MCF 10A (cell line): ENCODE measurements at regions of chr4 and their contacts with region 1.

Region 1: DNA sequence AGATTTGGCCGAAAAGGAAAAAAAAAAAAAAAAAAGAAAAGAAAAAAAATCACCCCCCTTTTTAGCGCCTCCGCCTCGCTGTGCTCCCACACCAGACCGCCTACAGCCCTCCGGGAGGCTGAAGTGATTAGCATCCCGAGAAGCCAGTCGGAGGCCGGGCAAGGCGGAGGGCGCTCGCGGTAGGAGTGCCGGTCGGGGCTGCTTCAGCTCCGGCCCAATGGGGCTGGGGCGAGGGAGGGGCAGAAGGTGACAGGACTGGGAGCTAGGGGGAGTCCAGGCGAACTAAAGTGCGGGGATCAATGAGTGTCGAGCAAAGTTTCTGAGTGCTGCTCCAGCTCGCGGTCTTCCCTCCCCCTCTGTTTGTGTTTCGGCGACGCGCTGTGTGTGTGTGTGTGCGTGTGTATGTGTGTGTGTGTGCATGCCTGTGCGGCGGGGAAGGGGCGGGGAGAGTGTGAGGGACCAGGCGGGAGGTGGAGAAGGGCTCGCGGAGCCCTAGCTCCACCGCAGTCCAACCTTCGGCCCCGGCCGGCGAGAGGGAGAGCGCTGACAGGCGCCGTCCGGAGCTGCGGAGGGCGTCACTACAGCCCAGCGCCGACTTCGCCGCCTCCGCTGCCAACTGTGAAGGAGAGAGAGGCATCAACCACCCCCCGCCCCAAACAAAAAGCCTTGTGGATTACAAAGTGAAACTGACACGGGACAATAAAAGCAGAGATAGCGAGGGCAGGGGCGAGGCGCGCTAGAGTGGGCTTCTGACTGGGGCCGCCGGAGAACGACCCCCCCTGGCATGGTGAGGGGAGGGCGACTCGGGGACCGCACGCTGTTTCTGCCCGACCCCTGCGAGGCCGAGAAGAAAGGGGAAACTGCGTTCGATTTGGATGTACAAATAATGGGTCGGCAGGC is at the start of gene FAT4:
- DNase-seq: peak; percentile 95
- H3K4me3 Mint-ChIP-seq: peak within 1 kb of the TSS; percentile 99
- H3K27ac Mint-ChIP-seq: peak within 1 kb of the TSS; percentile 63
- H3K4me1 Mint-ChIP-seq: peaks cover 18% of the 10 kb centered on the region
- H3K27me3 Mint-ChIP-seq: no peaks in the 10 kb centered on the region
- CTCF ChIP-seq: no peak
- total RNA-seq, gene FAT4: 6.4 and 6.6 TPM in 2 replicates

Region 2: GRCh38 chr4:125303058-125303457 is 11.9 kb before region 1 on chr4:
- CTCF ChIA-PET with region 1: interaction called, 10 read pairs
- POLR2A ChIA-PET with region 1: no interaction called
- intact Hi-C with region 1: no loop called
- DNase-seq: no peak
- H3K4me3 Mint-ChIP-seq: no peak overlapping the region
- H3K27ac Mint-ChIP-seq: no peak overlapping the region
- H3K4me1 Mint-ChIP-seq: no peaks in the 10 kb centered on the region
- H3K27me3 Mint-ChIP-seq: no peaks in the 10 kb centered on the region
- CTCF ChIP-seq: no peak

Region 3: DNA sequence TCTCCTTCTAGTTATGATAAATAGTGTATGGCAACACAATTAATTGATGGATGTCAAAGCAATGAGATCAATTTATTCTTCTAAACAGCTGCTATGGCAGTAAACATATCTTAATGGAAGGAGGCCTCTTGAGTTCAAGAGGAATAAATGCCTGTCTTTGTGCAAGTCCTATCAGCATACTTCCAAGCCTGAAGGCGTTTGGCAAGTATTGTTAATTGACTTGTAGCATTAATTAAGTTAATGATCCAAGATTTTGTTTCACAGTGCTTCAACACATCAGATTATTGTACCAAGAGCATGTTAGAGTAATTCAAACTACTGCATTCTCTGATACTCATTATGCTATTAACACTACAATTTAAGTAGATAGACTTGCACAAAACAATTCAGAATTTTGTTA is 144.6 kb after region 1 on chr4:
- CTCF ChIA-PET with region 1: interaction called, 3 read pairs
- POLR2A ChIA-PET with region 1: interaction called, 3 read pairs
- intact Hi-C with region 1: loop called (anchors 10 kb)
- DNase-seq: no peak
- H3K4me3 Mint-ChIP-seq: no peak overlapping the region
- H3K27ac Mint-ChIP-seq: no peak overlapping the region
- H3K4me1 Mint-ChIP-seq: no peaks in the 10 kb centered on the region
- H3K27me3 Mint-ChIP-seq: no peaks in the 10 kb centered on the region
- CTCF ChIP-seq: no peak

Region 4: DNA sequence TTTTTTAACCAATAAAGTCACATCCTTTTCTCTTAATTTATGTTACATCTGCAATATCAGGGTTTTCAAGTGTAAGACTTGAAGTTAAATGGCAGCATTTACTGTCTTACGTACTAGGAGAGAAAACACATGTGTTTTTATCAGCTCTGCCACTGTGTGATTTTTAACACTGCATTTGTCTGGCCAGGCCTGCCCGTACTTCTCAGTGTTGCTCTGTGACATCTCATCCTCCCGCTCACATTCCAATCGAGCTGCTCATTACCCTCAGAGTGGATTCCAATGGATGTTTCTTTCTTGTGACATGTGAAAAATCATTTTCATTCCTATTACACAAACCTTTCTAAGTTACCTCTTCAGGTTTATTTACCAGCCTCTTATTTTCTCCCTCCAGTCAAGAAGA is 420.2 kb after region 1 on chr4:
- CTCF ChIA-PET with region 1: interaction called, 39 read pairs
- POLR2A ChIA-PET with region 1: interaction called, 41 read pairs
- intact Hi-C with region 1: no loop called
- DNase-seq: peak; percentile 85
- H3K4me3 Mint-ChIP-seq: no peak overlapping the region
- H3K27ac Mint-ChIP-seq: peak overlapping the region; percentile 92
- H3K4me1 Mint-ChIP-seq: peaks cover 50% of the 10 kb centered on the region
- H3K27me3 Mint-ChIP-seq: no peaks in the 10 kb centered on the region
- CTCF ChIP-seq: no peak

Region 5: GRCh38 chr4:126051689-126052424 is 736.9 kb after region 1 on chr4:
- CTCF ChIA-PET with region 1: interaction called, 3 read pairs
- POLR2A ChIA-PET with region 1: no interaction called
- intact Hi-C with region 1: loop called (anchors 10 kb)
- DNase-seq: peak; percentile 33
- H3K4me3 Mint-ChIP-seq: no peak overlapping the region
- H3K27ac Mint-ChIP-seq: no peak overlapping the region
- H3K4me1 Mint-ChIP-seq: no peaks in the 10 kb centered on the region
- H3K27me3 Mint-ChIP-seq: no peaks in the 10 kb centered on the region
- CTCF ChIP-seq: no peak

Region 6: DNA sequence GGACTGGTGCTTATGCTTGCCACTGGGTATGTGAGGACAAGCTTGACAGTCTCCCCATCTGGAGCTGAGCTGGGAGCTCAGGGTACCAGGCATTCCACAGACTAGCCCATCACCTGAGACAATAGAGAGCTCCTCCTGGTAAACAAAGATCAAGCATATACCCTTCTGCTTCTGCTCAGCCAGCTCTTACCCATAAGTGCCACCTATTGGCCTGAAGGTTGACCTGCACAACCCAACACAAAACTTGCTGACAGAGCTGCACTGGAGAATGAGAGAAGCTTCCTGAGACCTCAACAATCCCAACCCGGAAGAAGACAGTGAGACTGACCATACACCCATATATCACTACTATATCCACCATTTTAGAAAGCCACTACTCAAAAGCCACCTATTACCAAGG is 1268.6 kb after region 1 on chr4:
- CTCF ChIA-PET with region 1: interaction called, 12 read pairs
- POLR2A ChIA-PET with region 1: no interaction called
- intact Hi-C with region 1: no loop called
- DNase-seq: peak; percentile 44
- H3K4me3 Mint-ChIP-seq: no peak overlapping the region
- H3K27ac Mint-ChIP-seq: no peak overlapping the region
- H3K4me1 Mint-ChIP-seq: no peaks in the 10 kb centered on the region
- H3K27me3 Mint-ChIP-seq: no peaks in the 10 kb centered on the region
- CTCF ChIP-seq: peak; percentile 53

Region 7: DNA sequence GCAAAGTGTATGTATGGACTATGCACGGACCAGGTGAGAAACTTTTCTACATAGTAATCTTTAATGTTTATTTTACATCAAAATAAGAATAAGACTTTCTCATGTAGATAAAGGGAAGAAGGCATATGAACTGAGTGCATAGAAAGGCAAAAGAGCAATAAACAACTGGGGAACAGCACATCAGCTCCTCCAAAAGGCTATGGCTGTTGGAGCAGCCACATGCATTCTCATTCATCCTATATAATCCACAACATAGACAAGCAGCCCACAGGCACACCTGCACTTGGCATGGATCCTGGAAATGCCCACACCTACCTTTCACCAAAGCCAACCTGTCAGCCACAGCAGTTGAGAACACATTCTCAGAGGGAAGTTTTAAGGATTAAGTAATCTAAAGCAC is 1730.9 kb after region 1 on chr4:
- CTCF ChIA-PET with region 1: no interaction called
- POLR2A ChIA-PET with region 1: no interaction called
- intact Hi-C with region 1: loop called (anchors 10 kb)
- DNase-seq: peak; percentile 80
- H3K4me3 Mint-ChIP-seq: no peak overlapping the region
- H3K27ac Mint-ChIP-seq: peak overlapping the region; percentile 17
- H3K4me1 Mint-ChIP-seq: peaks cover 28% of the 10 kb centered on the region
- H3K27me3 Mint-ChIP-seq: no peaks in the 10 kb centered on the region
- CTCF ChIP-seq: no peak